Activated CD4-positive, alpha-beta T cell treated with anti-CD3 and anti-CD28 coated beads, Interleukin-2, amount 10 ng/mL, durations not matched to agents 24 days and 14 days (primary cell): ENCODE measurements at regions of chr10 and their contacts with region 1.

Region 1: DNA sequence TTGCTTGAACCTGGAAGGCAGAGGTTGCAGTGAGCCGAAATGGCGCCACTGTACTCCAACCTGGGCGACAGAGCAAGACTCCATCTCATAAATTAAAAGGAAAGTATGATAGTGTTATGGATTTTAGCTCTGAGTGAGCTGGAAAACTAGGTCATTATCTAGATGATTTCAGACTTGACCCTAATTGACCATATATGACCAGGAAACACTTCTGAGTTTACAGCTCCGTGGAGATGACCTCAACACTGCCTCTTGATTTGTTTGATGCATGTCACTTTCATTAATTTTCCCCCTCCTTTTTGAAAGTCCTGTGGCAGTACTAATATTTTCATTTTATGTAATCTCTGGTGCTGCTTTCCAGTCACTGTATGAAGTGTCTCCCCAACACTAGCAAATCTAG is 7.8 kb upstream of the SEC61A2 start:
- DNase-seq: no peak
- H3K4me3 Mint-ChIP-seq: peak overlapping the region; percentile 79
- H3K27ac Mint-ChIP-seq: peak overlapping the region; percentile 97
- H3K4me1 Mint-ChIP-seq: peaks cover 27% of the 10 kb centered on the region
- H3K27me3 Mint-ChIP-seq: no peaks in the 10 kb centered on the region

Region 2: GRCh38 chr10:12241810-12242529 is 120.3 kb after region 1 on chr10:
- intact Hi-C with region 1: loop called (anchors 5 kb)
- DNase-seq: peak; percentile 67
- H3K4me3 Mint-ChIP-seq: peak overlapping the region; percentile 65
- H3K27ac Mint-ChIP-seq: peak overlapping the region; percentile 85
- H3K4me1 Mint-ChIP-seq: peaks cover 25% of the 10 kb centered on the region
- H3K27me3 Mint-ChIP-seq: no peaks in the 10 kb centered on the region